ENCODE measurements at regions of chr4 and their contacts with region 1.

Region 1: GRCh38 chr4:184448821-184449220 is 25.5 kb downstream of the IRF2 start:
- DNase-seq: no peak
- H3K4me3 ChIP-seq: peak overlapping the region; percentile 21 to 42
- H3K27ac ChIP-seq: peak overlapping the region; percentile 51 to 65
- H3K4me1 ChIP-seq: peaks cover 5 to 43% of the 10 kb centered on the region in 2 donors
- H3K27me3 ChIP-seq: no peaks in the 10 kb centered on the region
- CTCF ChIP-seq: no peak

Region 2: GRCh38 chr4:184408021-184408710 is 40.7 kb before region 1 on chr4:
- intact Hi-C with region 1: loop called (anchors 5 kb)
- DNase-seq: no peak
- H3K4me3 ChIP-seq: no peak overlapping the region
- H3K27ac ChIP-seq: peak overlapping the region; percentile 3 to 46
- H3K4me1 ChIP-seq: peaks cover 0 to 4% of the 10 kb centered on the region in 2 donors
- H3K27me3 ChIP-seq: no peaks in the 10 kb centered on the region
- CTCF ChIP-seq: no peak

Measured in ascending aorta (tissue), 2 donors.